ENCODE measurements at regions of chr19 and their contacts with region 1.

Region 1: GRCh38 chr19:46186101-46187100 is 38.4 kb downstream of the IGFL2 start:
- DNase-seq: no peak
- ATAC-seq: no peak
- H3K4me3 ChIP-seq: no peak overlapping the region
- H3K27ac ChIP-seq: no peak overlapping the region
- H3K4me1 ChIP-seq: no peaks in the 10 kb centered on the region
- H3K27me3 ChIP-seq: peaks cover 0 to 37% of the 10 kb centered on the region in 2 donors
- CTCF ChIP-seq: no peak

Region 2: GRCh38 chr19:46025835-46026234 is 160.6 kb before region 1 on chr19:
- intact Hi-C with region 1: loop called in 1 of 2 experiments (anchors 5 kb)
- DNase-seq: no peak
- ATAC-seq: no peak
- H3K4me3 ChIP-seq: no peak overlapping the region
- H3K27ac ChIP-seq: peak overlapping the region in 1 of 2 donors; percentile 67
- H3K4me1 ChIP-seq: peaks cover 0 to 29% of the 10 kb centered on the region in 2 donors
- H3K27me3 ChIP-seq: peaks cover 17 to 64% of the 10 kb centered on the region in 2 donors
- CTCF ChIP-seq: no peak

Region 3: GRCh38 chr19:46201413-46202310 is 15.3 kb after region 1 on chr19:
- intact Hi-C with region 1: no loop called
- DNase-seq: no peak
- ATAC-seq: no peak
- H3K4me3 ChIP-seq: no peak overlapping the region
- H3K27ac ChIP-seq: no peak overlapping the region
- H3K4me1 ChIP-seq: no peaks in the 10 kb centered on the region
- H3K27me3 ChIP-seq: peaks cover 0 to 5% of the 10 kb centered on the region in 2 donors
- CTCF ChIP-seq: no peak

Region 4: DNA sequence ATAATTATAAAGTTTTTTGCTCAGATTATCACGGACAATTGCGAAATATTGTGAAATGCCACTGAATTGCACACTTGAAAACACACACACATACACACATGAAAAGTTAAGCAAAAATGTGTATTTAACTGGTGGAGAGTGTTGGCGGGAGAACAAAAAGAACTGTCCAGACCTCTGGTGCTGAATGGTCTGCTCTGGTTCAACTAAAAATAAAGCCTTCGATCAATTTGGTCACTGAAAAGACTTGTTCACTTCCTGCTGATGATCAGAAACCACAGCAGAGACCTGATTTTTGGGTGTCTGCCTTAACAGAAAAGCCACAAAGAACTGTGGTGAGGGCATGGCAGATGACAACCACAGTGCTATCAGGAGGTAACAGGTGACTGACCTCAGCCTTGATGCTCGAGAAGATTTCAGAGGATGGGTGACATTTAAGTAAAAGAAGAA is 39.2 kb after region 1 on chr19:
- intact Hi-C with region 1: no loop called
- DNase-seq: peak in 1 of 4 donors; percentile 37
- ATAC-seq: no peak
- H3K4me3 ChIP-seq: no peak overlapping the region
- H3K27ac ChIP-seq: no peak overlapping the region
- H3K4me1 ChIP-seq: no peaks in the 10 kb centered on the region
- H3K27me3 ChIP-seq: peaks cover 0 to 57% of the 10 kb centered on the region in 2 donors
- CTCF ChIP-seq: no peak